ENCODE measurements at regions of chr6 and their contacts with region 1.

Region 1: DNA sequence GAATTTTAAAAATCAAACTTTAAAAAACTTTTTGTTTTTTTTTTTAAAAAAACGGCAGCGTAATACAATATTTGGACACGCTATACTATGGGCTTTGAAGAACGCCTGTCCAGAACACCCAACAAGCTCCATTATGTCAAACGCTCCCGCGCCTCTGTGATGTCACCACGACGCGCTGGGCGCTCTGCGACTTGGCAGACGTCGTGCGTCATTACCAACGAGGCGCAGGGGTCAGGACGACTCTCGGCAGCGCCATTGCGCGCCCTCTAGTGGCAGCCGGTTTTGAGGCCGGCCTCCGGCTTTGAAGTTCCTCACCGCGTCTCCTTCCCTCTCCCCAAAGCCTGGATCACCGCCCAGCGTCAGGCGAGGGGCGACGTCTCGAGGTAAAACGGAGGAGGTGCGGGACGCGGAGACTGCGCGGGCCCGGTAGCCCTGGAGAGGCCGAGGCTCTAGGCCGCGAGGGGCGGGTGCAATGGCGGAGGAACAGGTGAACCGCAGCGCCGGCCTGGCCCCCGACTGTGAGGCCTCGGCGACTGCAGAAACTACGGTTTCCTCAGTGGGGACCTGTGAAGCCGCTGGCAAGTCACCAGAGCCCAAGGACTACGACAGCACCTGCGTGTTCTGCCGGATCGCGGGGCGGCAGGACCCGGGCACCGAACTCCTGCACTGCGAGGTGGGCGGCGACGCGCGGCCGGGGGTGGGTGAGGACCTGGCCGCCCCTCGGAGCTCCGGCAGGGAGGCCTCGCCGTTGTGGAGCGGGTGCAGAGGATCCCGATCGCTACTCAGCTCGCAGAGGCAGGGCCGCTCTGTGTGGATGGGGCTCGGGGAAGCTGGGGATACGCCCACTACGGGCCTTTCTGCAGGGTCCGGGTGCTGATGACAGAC is at the start of gene HINT3:
- DNase-seq: peak; percentile 98 to 99 (median 98)
- ATAC-seq: peak; percentile 84 to 92 (median 90)
- H3K4me3 ChIP-seq: peak within 1 kb of the TSS; percentile 67 to 95 (median 92)
- H3K27ac ChIP-seq: peak within 1 kb of the TSS; percentile 96 to 99 (median 98)
- H3K4me1 ChIP-seq: peaks cover 0 to 32% (median 9%) of the 10 kb centered on the region in 4 donors
- H3K27me3 ChIP-seq: no peaks in the 10 kb centered on the region
- CTCF ChIP-seq: peak; percentile 97 to 100 (median 98)
- POLR2A ChIP-seq: peak; percentile 48
- total RNA-seq, gene HINT3: 8.5 to 16.6 (median 14.3) TPM

Region 2: GRCh38 chr6:125906158-125906998 is 50.4 kb before region 1 on chr6:
- intact Hi-C with region 1: loop called in 1 of 2 experiments (anchors 10 kb)
- DNase-seq: peak in 2 of 3 donors; percentile 36 to 54
- ATAC-seq: peak; percentile 61 to 85 (median 78)
- H3K4me3 ChIP-seq: no peak overlapping the region
- H3K27ac ChIP-seq: peak overlapping the region in 1 of 3 donors; percentile 40
- H3K4me1 ChIP-seq: peaks cover 0 to 11% (median 0%) of the 10 kb centered on the region in 4 donors
- H3K27me3 ChIP-seq: no peaks in the 10 kb centered on the region
- CTCF ChIP-seq: peak; percentile 46 to 73 (median 58)
- POLR2A ChIP-seq: no peak